Natural killer cell (primary cell): ENCODE measurements at regions of chr15 and their contacts with region 1.

Region 1: DNA sequence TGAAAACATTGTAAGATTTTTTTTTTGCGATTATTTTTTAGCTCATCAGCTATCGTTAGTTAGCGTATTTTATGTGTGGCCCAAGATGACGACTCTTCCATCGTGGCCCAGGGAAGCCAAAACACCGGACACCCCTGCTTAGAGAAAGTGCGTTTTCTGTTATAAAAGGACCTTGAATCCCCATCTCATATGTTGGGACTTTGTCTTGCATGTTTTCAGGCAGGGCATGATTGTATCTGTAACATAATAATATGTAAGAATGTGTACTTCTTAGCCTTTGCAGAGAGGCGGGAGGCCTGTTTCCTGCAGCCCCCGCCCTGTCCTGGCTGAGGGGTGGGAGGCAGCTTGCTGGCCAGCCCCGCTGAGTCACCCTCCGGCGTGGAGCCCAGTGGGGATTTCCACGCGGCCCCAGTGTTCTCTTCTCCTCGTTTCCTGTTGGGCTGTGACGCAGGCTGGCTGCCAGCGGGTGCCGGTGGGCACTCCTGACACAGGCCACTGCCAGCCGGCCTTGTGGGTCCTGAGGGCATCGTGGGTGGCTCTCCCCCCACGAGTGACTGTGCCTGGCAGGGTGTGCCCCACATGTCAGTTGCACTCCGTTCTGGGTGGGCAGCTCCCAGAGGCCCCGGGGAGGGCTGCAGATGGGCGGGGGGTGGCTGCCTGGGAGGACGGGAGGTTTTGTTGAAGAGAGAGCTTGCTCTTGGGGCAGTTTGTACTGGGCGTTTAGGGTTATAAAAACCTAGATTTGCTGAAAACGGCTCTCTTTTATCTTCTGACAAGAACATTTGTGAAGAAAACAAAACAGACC is 55.6 kb downstream of the SMAD3 start:
- DNase-seq: peak; percentile 92 to 94
- ATAC-seq: peak; percentile 85 to 93 (median 91)
- H3K4me3 ChIP-seq: peak overlapping the region; percentile 22
- H3K4me3 Mint-ChIP-seq: peak overlapping the region; percentile 84
- H3K27ac ChIP-seq: peak overlapping the region; percentile 96
- H3K27ac Mint-ChIP-seq: peak overlapping the region; percentile 97 to 98
- H3K4me1 ChIP-seq: peaks cover 76% of the 10 kb centered on the region
- H3K4me1 Mint-ChIP-seq: peaks cover 80 to 81% of the 10 kb centered on the region in 2 donors
- H3K27me3 ChIP-seq: no peaks in the 10 kb centered on the region
- H3K27me3 Mint-ChIP-seq: no peaks in the 10 kb centered on the region
- CTCF ChIP-seq: no peak

Region 2: DNA sequence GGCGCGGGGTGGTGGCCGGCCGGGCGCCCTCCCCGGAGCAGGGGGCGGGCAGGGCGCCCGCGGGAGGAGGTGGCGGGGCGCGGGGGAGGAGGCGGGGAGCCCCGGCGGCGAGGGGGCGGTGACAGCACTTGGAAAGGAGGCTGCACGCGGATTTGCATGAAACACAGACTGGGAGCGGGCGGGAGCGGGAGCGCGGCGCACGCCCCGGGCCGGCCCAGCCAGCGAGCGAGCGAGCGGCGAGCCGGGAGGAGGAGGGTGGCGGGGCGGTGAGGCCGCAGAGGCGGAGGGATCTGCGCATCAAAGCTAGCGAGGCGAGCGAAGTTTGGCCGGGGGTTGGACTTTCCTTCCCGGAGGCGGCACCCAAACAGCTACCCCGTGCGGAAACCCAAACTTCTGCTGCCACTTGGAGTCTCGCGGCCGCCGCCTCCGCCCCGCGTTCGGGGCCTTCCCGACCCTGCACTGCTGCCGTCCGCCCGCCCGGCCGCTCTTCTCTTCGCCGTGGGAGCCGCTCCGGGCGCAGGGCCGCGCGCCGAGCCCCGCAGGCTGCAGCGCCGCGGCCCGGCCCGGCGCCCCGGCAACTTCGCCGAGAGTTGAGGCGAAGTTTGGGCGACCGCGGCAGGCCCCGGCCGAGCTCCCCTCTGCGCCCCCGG is 55.5 kb before region 1 on chr15 and contains the start of gene SMAD3:
- intact Hi-C with region 1: loop called (anchors 5 kb)
- DNase-seq: peak; percentile 64 to 87
- ATAC-seq: peak; percentile 52 to 75 (median 69)
- H3K4me3 ChIP-seq: peak within 1 kb of the TSS; percentile 89
- H3K4me3 Mint-ChIP-seq: peak within 1 kb of the TSS; percentile 93
- H3K27ac ChIP-seq: peak within 1 kb of the TSS; percentile 63
- H3K27ac Mint-ChIP-seq: peak within 1 kb of the TSS; percentile 61 to 92
- H3K4me1 ChIP-seq: peaks cover 50% of the 10 kb centered on the region
- H3K4me1 Mint-ChIP-seq: peaks cover 46 to 50% of the 10 kb centered on the region in 2 donors
- H3K27me3 ChIP-seq: no peaks in the 10 kb centered on the region
- H3K27me3 Mint-ChIP-seq: no peaks in the 10 kb centered on the region
- CTCF ChIP-seq: no peak
- total RNA-seq, gene SMAD3: 47.1 to 72.6 (median 63.0) TPM

Region 3: GRCh38 chr15:67091071-67091979 is 29.7 kb before region 1 on chr15:
- intact Hi-C with region 1: loop called (anchors 1 kb)
- DNase-seq: peak; percentile 77 to 87
- ATAC-seq: peak; percentile 76 to 94 (median 92)
- H3K4me3 ChIP-seq: no peak overlapping the region
- H3K4me3 Mint-ChIP-seq: peak overlapping the region; percentile 89
- H3K27ac ChIP-seq: peak overlapping the region; percentile 71
- H3K27ac Mint-ChIP-seq: peak overlapping the region; percentile 91 to 96
- H3K4me1 ChIP-seq: peaks cover 95% of the 10 kb centered on the region
- H3K4me1 Mint-ChIP-seq: peaks cover 73 to 84% of the 10 kb centered on the region in 2 donors
- H3K27me3 ChIP-seq: no peaks in the 10 kb centered on the region
- H3K27me3 Mint-ChIP-seq: no peaks in the 10 kb centered on the region
- CTCF ChIP-seq: no peak

Region 4: DNA sequence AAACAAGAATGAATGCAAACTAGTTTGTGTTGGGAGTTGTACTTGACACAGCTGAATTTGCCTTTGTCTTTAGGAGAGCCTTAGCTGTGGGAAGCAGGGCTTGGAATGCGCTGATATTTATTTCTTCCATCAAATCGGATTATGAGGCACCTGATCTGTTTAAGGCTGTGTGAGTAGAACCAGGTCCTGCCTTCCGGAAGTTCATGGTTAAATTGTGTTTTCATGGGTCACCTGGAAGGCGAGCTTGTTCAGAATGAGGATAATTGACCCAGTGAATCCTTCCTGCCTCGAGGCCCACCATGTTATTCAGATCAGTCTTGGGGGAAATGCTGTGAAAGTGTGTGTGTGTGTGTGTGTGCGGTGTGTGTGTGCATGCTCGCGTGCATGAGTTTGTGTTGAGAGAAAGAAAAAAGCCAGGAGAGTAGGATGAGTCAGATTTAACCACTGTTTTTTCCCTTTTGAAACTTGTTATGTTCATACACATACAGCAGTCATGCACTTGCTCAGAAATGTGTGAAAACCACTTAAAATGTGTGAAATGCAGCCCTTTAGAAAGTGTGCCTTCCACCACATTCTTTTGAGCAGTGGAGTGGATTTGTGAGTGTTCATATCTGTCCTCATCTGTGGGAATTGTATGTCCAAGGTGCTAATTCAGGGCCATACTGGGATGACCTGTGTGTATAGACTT is 19.0 kb before region 1 on chr15:
- intact Hi-C with region 1: loop called (anchors 1 kb)
- DNase-seq: peak; percentile 44 to 86
- ATAC-seq: peak; percentile 67 to 88 (median 87)
- H3K4me3 ChIP-seq: no peak overlapping the region
- H3K4me3 Mint-ChIP-seq: no peak overlapping the region
- H3K27ac ChIP-seq: peak overlapping the region; percentile 79
- H3K27ac Mint-ChIP-seq: no peak overlapping the region
- H3K4me1 ChIP-seq: peaks cover 95% of the 10 kb centered on the region
- H3K4me1 Mint-ChIP-seq: peaks cover 26 to 42% of the 10 kb centered on the region in 2 donors
- H3K27me3 ChIP-seq: no peaks in the 10 kb centered on the region
- H3K27me3 Mint-ChIP-seq: peaks cover 0 to 8% of the 10 kb centered on the region in 2 donors
- CTCF ChIP-seq: no peak

Region 5: GRCh38 chr15:67107014-67107812 is 13.8 kb before region 1 on chr15:
- intact Hi-C with region 1: loop called (anchors 1 kb)
- DNase-seq: peak; percentile 29 to 43
- ATAC-seq: peak; percentile 25 to 57 (median 47)
- H3K4me3 ChIP-seq: no peak overlapping the region
- H3K4me3 Mint-ChIP-seq: peak overlapping the region; percentile 65
- H3K27ac ChIP-seq: peak overlapping the region; percentile 50
- H3K27ac Mint-ChIP-seq: peak overlapping the region in 1 of 2 donors; percentile 69
- H3K4me1 ChIP-seq: peaks cover 89% of the 10 kb centered on the region
- H3K4me1 Mint-ChIP-seq: peaks cover 4 to 63% of the 10 kb centered on the region in 2 donors
- H3K27me3 ChIP-seq: no peaks in the 10 kb centered on the region
- H3K27me3 Mint-ChIP-seq: peaks cover 0 to 8% of the 10 kb centered on the region in 2 donors
- CTCF ChIP-seq: no peak

Region 6: DNA sequence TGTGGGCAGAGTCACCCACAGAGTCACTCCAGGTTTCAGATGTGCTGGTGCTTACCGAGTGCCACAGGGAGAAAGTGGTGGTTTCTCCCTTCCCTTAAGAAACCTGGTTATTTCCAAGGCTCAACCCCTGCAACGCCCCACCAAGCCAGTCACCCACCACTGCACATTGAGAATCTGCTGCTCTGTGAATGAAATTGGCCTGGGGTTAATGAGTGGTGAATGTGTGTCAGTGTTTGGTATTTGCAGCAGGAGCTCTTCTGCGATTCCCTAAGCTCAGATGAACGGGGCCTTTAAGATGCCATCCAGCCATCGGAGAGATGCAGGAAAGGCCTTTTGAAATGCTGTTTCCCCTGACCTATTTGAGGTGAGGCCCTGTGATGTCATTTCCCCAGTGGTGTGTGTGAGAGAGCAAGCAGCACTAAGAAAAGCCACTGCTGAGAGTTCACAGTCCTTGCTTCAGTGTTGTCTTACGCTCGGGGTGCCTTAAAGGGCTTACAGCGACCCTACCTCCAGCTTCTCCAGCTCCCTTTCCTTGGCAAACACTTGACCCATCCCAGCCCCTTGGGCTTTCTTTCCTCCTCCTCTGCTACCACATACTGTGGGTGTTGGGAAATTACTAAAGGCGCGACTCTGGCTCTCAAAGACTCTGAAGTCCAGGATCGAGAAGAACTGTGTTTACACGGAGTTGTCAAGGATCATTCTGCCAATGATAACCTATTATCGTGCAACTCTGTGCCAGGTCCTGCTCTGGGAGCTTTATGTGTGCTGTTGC is 13.2 kb after region 1 on chr15:
- intact Hi-C with region 1: loop called (anchors 1 kb)
- DNase-seq: peak; percentile 61 to 91
- ATAC-seq: peak; percentile 91 to 97 (median 95)
- H3K4me3 ChIP-seq: peak overlapping the region; percentile 20
- H3K4me3 Mint-ChIP-seq: peak overlapping the region; percentile 93
- H3K27ac ChIP-seq: peak overlapping the region; percentile 92
- H3K27ac Mint-ChIP-seq: peak overlapping the region; percentile 100
- H3K4me1 ChIP-seq: peaks cover 77% of the 10 kb centered on the region
- H3K4me1 Mint-ChIP-seq: peaks cover 80 to 88% of the 10 kb centered on the region in 2 donors
- H3K27me3 ChIP-seq: no peaks in the 10 kb centered on the region
- H3K27me3 Mint-ChIP-seq: no peaks in the 10 kb centered on the region
- CTCF ChIP-seq: no peak

Region 7: GRCh38 chr15:67146875-67147381 is 25.9 kb after region 1 on chr15:
- intact Hi-C with region 1: no loop called
- DNase-seq: peak in 1 of 2 donors; percentile 50
- ATAC-seq: peak; percentile 27 to 39 (median 30)
- H3K4me3 ChIP-seq: no peak overlapping the region
- H3K4me3 Mint-ChIP-seq: peak overlapping the region; percentile 9
- H3K27ac ChIP-seq: no peak overlapping the region
- H3K27ac Mint-ChIP-seq: peak overlapping the region; percentile 31 to 80
- H3K4me1 ChIP-seq: peaks cover 60% of the 10 kb centered on the region
- H3K4me1 Mint-ChIP-seq: peaks cover 71 to 82% of the 10 kb centered on the region in 2 donors
- H3K27me3 ChIP-seq: no peaks in the 10 kb centered on the region
- H3K27me3 Mint-ChIP-seq: no peaks in the 10 kb centered on the region
- CTCF ChIP-seq: no peak